GM12878 (cell line): ENCODE measurements at regions of chr1 and their contacts with region 1.

Region 1: DNA sequence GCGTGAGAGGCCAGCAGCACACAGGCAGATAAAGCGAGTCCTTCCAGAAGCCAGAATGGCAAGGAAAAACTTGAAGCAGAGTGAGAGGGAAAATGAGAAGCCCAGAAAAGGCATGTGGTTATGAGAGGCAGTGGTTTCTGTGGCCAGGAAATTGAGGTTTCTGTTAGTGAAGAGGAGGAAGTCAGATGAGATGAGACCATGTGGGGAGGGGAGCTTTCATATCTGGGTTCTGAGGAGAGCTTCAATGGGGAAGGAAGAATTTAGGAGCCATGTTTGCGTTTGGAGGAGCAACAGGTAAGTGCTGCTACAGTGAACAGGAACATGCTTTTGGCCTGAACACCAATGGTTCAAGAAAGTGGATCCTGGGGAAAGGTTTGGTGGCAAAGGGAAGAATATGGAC is 6.1 kb upstream of the CD1A start:
- DNase-seq: peak; percentile 13
- ATAC-seq: peak; percentile 71
- H3K4me3 ChIP-seq: no peak overlapping the region
- H3K27ac ChIP-seq: no peak overlapping the region
- H3K4me1 ChIP-seq: peaks cover 9% of the 10 kb centered on the region
- H3K27me3 ChIP-seq: no peaks in the 10 kb centered on the region
- CTCF ChIP-seq: no peak
- EP300 ChIP-seq: no peak
- POLR2A ChIP-seq: no peak
- RAD21 ChIP-seq: no peak

Region 2: DNA sequence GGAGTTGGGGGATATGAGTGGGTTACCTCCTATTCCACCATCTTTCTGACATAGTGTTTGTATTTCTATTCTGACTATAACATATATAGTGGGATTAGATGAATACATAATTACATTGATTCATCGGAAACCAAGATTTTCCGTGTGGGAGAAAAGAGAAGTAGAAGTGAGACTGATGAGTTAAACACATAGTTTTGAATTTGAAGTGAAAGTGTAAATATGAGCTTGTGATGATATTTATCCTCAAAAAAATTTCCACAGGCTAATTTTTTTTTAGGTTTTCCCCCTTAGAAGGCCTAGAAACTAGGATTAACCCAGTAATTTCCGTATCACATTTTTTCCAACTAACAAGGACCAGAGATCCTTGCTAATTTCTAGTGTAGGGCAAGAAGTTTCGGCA is 76.3 kb after region 1 on chr1:
- CTCF ChIA-PET with region 1: interaction called, 105 read pairs
- POLR2A ChIA-PET with region 1: no interaction called
- RAD21 ChIA-PET with region 1: interaction called, 93 read pairs
- SMC1A ChIA-PET with region 1: interaction called, 123 read pairs
- in situ Hi-C with region 1: no loop called
- intact Hi-C with region 1: no loop called
- DNase-seq: no peak
- ATAC-seq: peak; percentile 47
- H3K4me3 ChIP-seq: no peak overlapping the region
- H3K27ac ChIP-seq: no peak overlapping the region
- H3K4me1 ChIP-seq: peaks cover 9% of the 10 kb centered on the region
- H3K27me3 ChIP-seq: no peaks in the 10 kb centered on the region
- CTCF ChIP-seq: no peak
- EP300 ChIP-seq: no peak; a peak in 1 of 4 replicates
- POLR2A ChIP-seq: no peak
- RAD21 ChIP-seq: no peak

Region 3: GRCh38 chr1:158496374-158496773 is 248.3 kb after region 1 on chr1:
- CTCF ChIA-PET with region 1: interaction called, 13 read pairs
- POLR2A ChIA-PET with region 1: no interaction called
- RAD21 ChIA-PET with region 1: interaction called, 8 read pairs
- SMC1A ChIA-PET with region 1: interaction called, 5 read pairs
- in situ Hi-C with region 1: no loop called
- intact Hi-C with region 1: no loop called
- DNase-seq: no peak
- ATAC-seq: peak; percentile 55; the same call in 2 of the 3 replicates
- H3K4me3 ChIP-seq: no peak overlapping the region
- H3K27ac ChIP-seq: no peak overlapping the region
- H3K4me1 ChIP-seq: no peaks in the 10 kb centered on the region
- H3K27me3 ChIP-seq: 0 out of 4 replicates have a peak, but pooled peaks cover 0 to 3% of the 10 kb centered on the region in 2 experiments
- CTCF ChIP-seq: peak; percentile 24 to 47 (median 27); a peak in 4 of 6 replicates
- EP300 ChIP-seq: no peak
- POLR2A ChIP-seq: no peak
- RAD21 ChIP-seq: peak; percentile 60